ENCODE measurements at regions of chr17 and their contacts with region 1.

Region 1: GRCh38 chr17:39653662-39654331 is 11.4 kb upstream of the TCAP start:
- DNase-seq: peak; percentile 88
- ATAC-seq: peak; percentile 85
- H3K4me3 Mint-ChIP-seq: no peak overlapping the region
- H3K27ac Mint-ChIP-seq: no peak overlapping the region
- H3K4me1 Mint-ChIP-seq: peaks cover 37% of the 10 kb centered on the region
- H3K27me3 Mint-ChIP-seq: no peaks in the 10 kb centered on the region

Region 2: GRCh38 chr17:39591958-39592954 is 61.5 kb before region 1 on chr17:
- CTCF ChIA-PET with region 1: no interaction called
- POLR2A ChIA-PET with region 1: no interaction called
- DNase-seq: peak; percentile 67
- ATAC-seq: peak; percentile 49
- H3K4me3 Mint-ChIP-seq: no peak overlapping the region
- H3K27ac Mint-ChIP-seq: no peak overlapping the region
- H3K4me1 Mint-ChIP-seq: no peaks in the 10 kb centered on the region
- H3K27me3 Mint-ChIP-seq: peaks cover 41% of the 10 kb centered on the region

Region 3: GRCh38 chr17:39636927-39637736 is 16.7 kb before region 1 on chr17 and contains the start of gene STARD3:
- CTCF ChIA-PET with region 1: interaction called, 97 read pairs
- POLR2A ChIA-PET with region 1: no interaction called
- DNase-seq: peak; percentile 94
- ATAC-seq: peak; percentile 90
- H3K4me3 Mint-ChIP-seq: peak within 1 kb of the TSS; percentile 92
- H3K27ac Mint-ChIP-seq: peak within 1 kb of the TSS; percentile 81
- H3K4me1 Mint-ChIP-seq: peaks cover 68% of the 10 kb centered on the region
- H3K27me3 Mint-ChIP-seq: no peaks in the 10 kb centered on the region
- total RNA-seq, gene STARD3: 69.0 to 72.1 TPM

Region 4: GRCh38 chr17:39668199-39668966 is 14.6 kb after region 1 on chr17 and contains the start of gene PNMT:
- CTCF ChIA-PET with region 1: interaction called, 22 read pairs
- POLR2A ChIA-PET with region 1: interaction called, 5 read pairs
- DNase-seq: peak; percentile 78
- ATAC-seq: peak; percentile 83
- H3K4me3 Mint-ChIP-seq: peak within 1 kb of the TSS; percentile 26
- H3K27ac Mint-ChIP-seq: no peak within 1 kb of the TSS
- H3K4me1 Mint-ChIP-seq: peaks cover 11% of the 10 kb centered on the region
- H3K27me3 Mint-ChIP-seq: peaks cover 29% of the 10 kb centered on the region
- total RNA-seq, gene PNMT: not detected

Region 5: GRCh38 chr17:39676198-39676819 is 22.5 kb after region 1 on chr17:
- CTCF ChIA-PET with region 1: interaction called, 22 read pairs
- POLR2A ChIA-PET with region 1: no interaction called
- DNase-seq: peak; percentile 80
- ATAC-seq: peak; percentile 76
- H3K4me3 Mint-ChIP-seq: no peak overlapping the region
- H3K27ac Mint-ChIP-seq: peak overlapping the region; percentile 87
- H3K4me1 Mint-ChIP-seq: peaks cover 63% of the 10 kb centered on the region
- H3K27me3 Mint-ChIP-seq: peaks cover 3% of the 10 kb centered on the region

Region 6: DNA sequence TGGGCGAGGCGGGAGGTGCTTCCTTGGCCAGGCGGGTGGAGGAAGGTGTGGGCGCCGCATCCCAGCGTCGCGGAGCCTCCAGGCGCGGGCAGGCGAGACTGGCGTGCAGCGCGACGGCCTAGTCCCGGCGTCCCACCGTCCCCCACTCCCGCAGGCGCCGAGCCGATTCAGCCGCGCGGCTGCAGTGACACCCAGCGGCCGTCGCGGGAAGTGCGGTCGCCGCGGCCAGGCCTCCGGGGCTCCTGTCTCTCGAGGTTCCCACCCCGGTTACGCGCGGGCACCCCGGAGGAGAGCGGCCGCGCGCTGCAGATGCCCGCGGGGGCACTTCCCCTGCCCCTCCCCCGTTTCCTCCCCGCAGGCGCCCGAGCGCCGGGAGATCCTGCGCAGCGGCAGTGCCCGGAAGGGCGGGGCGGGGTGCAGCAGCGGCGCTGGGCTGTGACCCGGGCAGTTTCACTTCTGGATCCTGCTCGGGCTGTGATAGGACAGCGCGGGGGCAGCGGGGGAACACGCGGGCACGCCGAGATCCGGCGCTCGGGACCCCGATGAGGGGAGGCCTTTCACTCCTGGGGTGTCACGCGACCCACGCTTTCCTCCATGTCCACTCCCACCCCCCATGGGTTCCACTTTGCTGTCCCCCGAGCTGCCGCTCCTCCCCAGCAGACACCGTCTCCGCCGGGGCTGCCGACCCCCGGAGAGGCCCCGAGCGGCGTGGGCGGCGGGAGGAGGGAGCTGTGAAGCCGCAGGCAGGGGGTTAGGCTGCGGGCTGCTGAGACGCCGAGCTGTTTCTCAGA is 100.6 kb after region 1 on chr17:
- CTCF ChIA-PET with region 1: interaction called, 10 read pairs
- POLR2A ChIA-PET with region 1: no interaction called
- DNase-seq: peak; percentile 97
- ATAC-seq: peak; percentile 85
- H3K4me3 Mint-ChIP-seq: peak overlapping the region; percentile 79
- H3K27ac Mint-ChIP-seq: peak overlapping the region; percentile 83
- H3K4me1 Mint-ChIP-seq: peaks cover 63% of the 10 kb centered on the region
- H3K27me3 Mint-ChIP-seq: no peaks in the 10 kb centered on the region